ENCODE measurements at regions of chr19 and their contacts with region 1.

Region 1: DNA sequence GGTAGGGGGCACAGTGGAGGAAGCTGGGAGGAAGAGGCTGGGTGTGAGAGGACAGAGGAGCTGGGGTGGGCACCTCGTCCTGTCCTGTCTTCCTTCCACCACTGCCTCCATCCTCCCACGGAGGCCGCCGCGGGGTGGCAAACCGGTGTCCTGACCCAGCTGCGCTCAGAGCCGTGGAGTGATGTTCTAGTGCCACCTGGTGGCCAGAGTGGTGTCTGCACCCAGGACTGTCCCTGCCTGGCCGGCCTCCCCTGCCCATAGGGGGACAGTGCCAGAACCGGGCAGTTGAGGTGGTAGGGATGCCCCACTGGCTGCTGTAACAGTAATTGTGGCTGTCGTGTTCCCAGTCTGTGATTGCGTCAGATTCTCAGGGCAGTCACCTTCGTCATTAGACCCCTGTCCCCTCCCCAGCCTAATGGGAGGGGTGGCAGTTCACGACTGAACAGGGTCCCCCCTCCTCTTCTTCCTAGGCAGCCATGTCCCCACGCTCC is 11.1 kb upstream of the ARRDC2 start:
- DNase-seq: peak; percentile 70 to 91 (median 86)
- H3K4me3 ChIP-seq: peak overlapping the region in 2 of 59 donors; percentile 2 to 13
- H3K27ac ChIP-seq: no peak overlapping the region
- H3K27me3 ChIP-seq: no peaks in the 10 kb centered on the region
- CTCF ChIP-seq: peak; percentile 69 to 100 (median 99)

Region 2: GRCh38 chr19:17938092-17938845 is 58.6 kb before region 1 on chr19:
- intact Hi-C with region 1: loop called (anchors 2 kb)
- DNase-seq: peak; percentile 72 to 89 (median 84)
- H3K4me3 ChIP-seq: no peak overlapping the region
- H3K27ac ChIP-seq: no peak overlapping the region
- H3K27me3 ChIP-seq: no peaks in the 10 kb centered on the region
- CTCF ChIP-seq: peak; percentile 71 to 98 (median 93)

Region 3: DNA sequence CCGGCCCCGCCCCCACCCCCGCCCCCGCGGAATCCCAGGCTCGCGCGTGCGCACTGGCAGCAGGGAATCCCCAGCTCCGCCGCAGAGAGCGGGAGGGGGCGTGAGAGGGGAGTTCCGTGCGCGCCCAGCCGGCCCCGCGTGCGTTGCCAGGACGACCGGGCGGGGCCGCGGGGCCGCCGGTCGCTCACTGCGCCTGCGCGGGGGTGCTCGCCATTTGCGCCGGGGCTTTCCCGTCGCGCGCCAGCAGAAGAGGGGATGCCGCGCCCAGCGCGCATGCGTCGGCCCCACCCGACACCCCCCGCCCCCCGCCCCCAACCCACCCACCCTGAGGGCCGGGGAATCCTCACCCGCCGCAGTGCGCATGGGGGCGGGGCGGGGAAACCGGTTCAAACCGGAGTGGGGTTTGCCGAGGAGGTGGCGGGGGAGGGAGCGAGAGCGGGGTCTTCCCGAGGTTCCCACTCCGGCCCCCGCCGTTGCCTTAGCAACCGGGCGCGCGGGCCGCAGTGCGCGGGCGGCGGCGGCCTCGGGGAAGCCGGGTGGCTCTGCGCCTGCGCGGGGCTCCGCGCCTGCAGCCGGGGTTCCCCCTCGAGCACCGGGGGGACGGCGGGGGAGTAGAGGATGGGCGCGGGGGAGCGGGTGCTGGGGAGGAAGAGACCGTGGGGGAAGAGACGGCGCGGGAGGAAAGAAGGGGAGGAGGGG is 48.9 kb before region 1 on chr19:
- intact Hi-C with region 1: loop called in 1 of 2 experiments (anchors 2 kb)
- DNase-seq: peak; percentile 69 to 93 (median 84)
- H3K4me3 ChIP-seq: peak overlapping the region; percentile 53 to 82 (median 70)
- H3K27ac ChIP-seq: peak overlapping the region in 47 of 59 donors; percentile 29 to 88 (median 70)
- H3K27me3 ChIP-seq: peaks cover 0 to 37% (median 25%) of the 10 kb centered on the region in 45 donors
- CTCF ChIP-seq: peak in 12 of 56 donors; percentile 6 to 57 (median 22)

Region 4: DNA sequence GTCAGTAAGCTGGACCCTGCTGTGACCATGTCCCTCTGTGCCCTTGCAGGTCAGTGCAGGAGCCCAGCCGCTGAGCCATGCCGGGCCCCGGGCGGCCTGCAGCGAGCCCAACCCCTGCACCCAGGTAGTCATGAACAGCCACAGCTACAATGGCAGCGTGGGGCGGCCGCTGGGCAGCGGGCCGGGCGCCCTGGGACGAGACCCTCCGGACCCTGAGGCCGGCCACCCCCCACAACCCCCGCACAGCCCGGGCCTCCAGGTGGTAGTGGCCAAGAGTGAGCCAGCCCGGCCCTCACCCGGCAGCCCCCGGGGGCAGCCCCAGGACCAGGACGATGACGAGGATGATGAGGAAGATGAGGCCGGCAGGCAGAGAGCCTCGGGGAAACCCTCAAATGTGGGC is 23.1 kb before region 1 on chr19:
- intact Hi-C with region 1: no loop called
- DNase-seq: no peak
- H3K4me3 ChIP-seq: no peak overlapping the region
- H3K27ac ChIP-seq: no peak overlapping the region
- H3K27me3 ChIP-seq: peaks cover 0 to 3% (median 0%) of the 10 kb centered on the region in 45 donors
- CTCF ChIP-seq: no peak